ENCODE measurements at regions of chr20 and their contacts with region 1.

Region 1: DNA sequence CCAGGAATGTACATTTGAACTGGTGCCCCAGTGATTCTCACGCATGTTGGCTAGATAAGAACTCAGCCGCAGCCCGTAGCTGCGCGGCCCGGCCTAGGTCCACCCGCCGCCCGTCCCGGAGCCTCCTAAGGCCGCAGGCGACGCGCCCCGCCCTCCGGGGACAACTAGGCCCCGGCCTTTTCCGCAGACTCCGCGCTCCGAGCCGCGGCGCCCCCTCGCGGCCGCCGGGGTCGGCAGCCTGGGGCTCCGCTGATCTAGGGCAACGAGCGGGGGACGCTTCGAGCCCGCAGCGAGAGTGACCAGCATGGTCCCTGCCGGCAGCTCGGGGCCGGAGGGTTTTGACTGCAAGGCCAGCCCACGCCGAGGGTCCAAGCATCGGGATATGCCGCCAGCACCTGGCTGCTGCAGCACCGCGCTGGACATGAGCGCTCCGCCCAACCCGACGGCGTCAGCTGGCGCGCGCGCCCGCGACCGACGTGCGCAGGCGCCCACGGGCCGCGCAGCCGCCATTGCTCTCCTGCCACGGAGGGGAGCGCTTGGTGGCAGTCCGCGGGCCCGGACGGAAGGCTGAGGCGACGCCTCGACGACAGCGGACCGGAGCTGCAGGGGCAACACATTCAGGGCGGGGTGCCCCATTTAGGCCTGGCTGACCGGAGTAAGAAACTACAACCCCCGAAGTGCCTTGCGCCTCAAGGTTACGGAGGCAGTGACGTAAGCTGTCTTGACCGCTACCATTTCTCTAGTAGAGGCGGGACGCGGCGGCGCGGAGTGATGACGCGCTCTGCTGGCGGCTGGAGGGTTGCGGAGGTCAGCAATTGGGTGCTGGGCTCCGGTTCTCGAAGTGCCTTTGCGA is at the start of gene AP5S1:
- DNase-seq: peak; percentile 97 to 98
- ATAC-seq: peak; percentile 90 to 95 (median 92)
- H3K4me3 ChIP-seq: peak within 1 kb of the TSS; percentile 65 to 81 (median 78)
- H3K27ac ChIP-seq: peak within 1 kb of the TSS; percentile 94 to 100 (median 98)
- H3K4me1 ChIP-seq: peaks cover 3 to 38% (median 34%) of the 10 kb centered on the region in 9 donors
- H3K27me3 ChIP-seq: no peaks in the 10 kb centered on the region
- CTCF ChIP-seq: peak; percentile 92 to 100 (median 99)
- total RNA-seq, gene AP5S1: 12.0 to 17.5 (median 14.7) TPM

Region 2: GRCh38 chr20:3781153-3781910 is 38.9 kb before region 1 on chr20 and contains the start of gene SPEF1:
- intact Hi-C with region 1: loop called (anchors 1 to 5 kb)
- DNase-seq: peak; percentile 55 to 87
- ATAC-seq: peak; percentile 68 to 87 (median 80)
- H3K4me3 ChIP-seq: peak within 1 kb of the TSS in 9 of 10 donors; percentile 27 to 51 (median 44)
- H3K27ac ChIP-seq: peak within 1 kb of the TSS in 8 of 10 donors; percentile 2 to 57 (median 30)
- H3K4me1 ChIP-seq: peaks cover 33 to 61% (median 43%) of the 10 kb centered on the region in 9 donors
- H3K27me3 ChIP-seq: peaks cover 0 to 17% (median 0%) of the 10 kb centered on the region in 7 donors
- CTCF ChIP-seq: peak in 7 of 9 donors; percentile 27 to 54 (median 44)
- total RNA-seq, gene SPEF1: 0.16 to 0.47 (median 0.23) TPM in 6 of 10 donors, not detected in the others

Region 3: DNA sequence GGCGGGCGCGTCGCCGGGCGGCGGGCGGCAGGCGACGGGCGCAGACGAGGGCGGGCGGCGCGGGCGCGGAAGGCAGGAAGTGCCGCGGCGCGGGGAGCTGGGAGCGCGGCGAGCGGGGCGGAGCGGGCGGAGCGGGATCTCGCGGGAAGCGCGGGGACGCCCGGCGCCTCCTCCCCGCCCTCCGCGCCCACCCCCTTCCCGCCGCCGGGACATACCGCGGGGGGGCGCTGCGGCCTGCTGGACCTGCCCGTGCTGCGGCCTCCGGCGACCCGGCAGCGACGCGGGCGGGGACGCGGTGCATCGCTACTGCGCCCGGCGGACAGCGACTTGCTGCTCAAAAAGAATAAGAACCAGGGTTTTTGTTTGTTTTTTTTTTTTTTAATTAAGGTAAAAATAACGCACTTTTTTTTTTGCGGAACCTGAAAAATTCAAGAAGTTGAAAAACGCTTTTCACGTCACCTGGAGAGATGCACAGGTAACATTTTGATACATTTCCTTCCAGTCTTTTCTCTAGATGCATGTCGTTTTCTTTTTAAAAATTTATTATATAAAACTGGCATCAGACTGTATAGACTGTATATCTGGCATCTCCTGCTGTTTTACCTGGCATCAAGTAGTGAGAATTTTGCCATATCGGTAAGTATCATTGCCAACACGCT is 33.5 kb before region 1 on chr20 and contains the start of gene CENPB:
- intact Hi-C with region 1: loop called (anchors 1 to 5 kb)
- DNase-seq: peak; percentile 90 to 94
- ATAC-seq: peak; percentile 91 to 95 (median 92)
- H3K4me3 ChIP-seq: peak within 1 kb of the TSS; percentile 47 to 90 (median 70)
- H3K27ac ChIP-seq: peak within 1 kb of the TSS; percentile 61 to 89 (median 84)
- H3K4me1 ChIP-seq: peaks cover 17 to 43% (median 33%) of the 10 kb centered on the region in 9 donors
- H3K27me3 ChIP-seq: no peaks in the 10 kb centered on the region
- CTCF ChIP-seq: peak; percentile 71 to 95 (median 88)
- total RNA-seq, gene CENPB: 52.3 to 95.7 (median 67.7) TPM

Region 4: DNA sequence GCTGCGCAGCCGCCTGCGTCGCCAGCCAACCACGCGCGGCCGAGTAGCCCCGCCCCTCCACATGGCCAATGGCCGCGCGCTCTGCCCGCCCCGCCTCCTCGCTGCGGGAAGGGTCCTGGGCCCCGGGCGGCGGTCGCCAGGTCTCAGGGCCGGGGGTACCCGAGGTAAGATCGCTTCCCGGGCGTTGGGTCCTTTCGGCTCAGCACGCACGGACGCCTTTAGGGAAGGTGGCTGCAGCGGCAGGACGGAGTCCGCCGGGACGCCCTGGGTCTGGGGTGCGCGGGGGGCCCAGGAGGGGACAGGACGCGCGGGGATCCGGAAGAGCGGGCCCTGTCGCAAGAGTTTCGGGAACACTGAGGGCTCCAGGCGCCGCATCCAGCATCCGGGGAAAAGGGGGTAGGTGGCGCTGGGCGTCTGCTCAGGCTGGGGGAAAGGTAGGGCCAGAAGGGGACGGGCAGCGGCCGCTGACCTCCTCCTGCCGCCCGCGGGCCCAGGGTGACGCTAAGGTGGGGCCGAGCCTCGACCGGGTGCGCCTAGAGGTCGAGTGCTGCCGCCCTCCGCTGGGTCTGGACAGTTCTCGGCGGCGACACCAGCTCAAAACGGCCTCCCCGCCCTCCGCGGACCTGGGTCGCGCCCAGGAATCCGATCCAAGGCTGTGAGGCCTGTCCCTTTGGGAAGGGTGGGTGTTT is 26.6 kb after region 1 on chr20 and contains the start of gene MAVS:
- intact Hi-C with region 1: loop called in 1 of 10 experiments (anchors 2 kb)
- DNase-seq: peak; percentile 91 to 93
- ATAC-seq: peak; percentile 96 to 99 (median 98)
- H3K4me3 ChIP-seq: peak within 1 kb of the TSS; percentile 74 to 100 (median 95)
- H3K27ac ChIP-seq: peak within 1 kb of the TSS; percentile 87 to 99 (median 96)
- H3K4me1 ChIP-seq: peaks cover 5 to 49% (median 32%) of the 10 kb centered on the region in 9 donors
- H3K27me3 ChIP-seq: no peaks in the 10 kb centered on the region
- CTCF ChIP-seq: peak in 2 of 9 donors; percentile 18 to 19
- total RNA-seq, gene MAVS: 36.3 to 48.7 (median 46.1) TPM

Measured in heart right ventricle (tissue), 16 donors.